ENCODE measurements at regions of chr19 and their contacts with region 1.

Region 1: DNA sequence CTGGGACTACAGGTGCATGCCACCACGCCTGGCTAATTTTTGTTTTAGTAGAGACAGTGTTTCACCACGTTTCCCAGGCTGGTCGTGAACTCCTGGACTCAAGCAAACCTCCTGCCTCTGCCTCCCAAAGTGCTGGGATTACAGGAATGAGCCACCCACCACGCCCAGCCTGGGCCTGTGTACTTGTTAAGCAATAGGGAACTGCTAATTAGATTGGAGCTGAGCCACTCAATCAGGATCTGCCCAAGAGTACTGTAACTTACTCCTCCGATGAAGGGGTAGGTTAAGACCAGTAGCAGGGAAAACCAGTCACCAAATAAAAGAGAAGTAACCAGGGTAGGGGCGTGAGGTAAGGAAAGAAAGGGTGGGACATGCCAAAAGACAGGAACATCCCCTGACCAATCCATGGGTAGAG is 2.3 kb downstream of the DDX39A start:
- DNase-seq: no peak
- H3K4me3 Mint-ChIP-seq: peak overlapping the region; percentile 93
- H3K27ac Mint-ChIP-seq: peak overlapping the region; percentile 97
- H3K4me1 Mint-ChIP-seq: peaks cover 55% of the 10 kb centered on the region
- H3K27me3 Mint-ChIP-seq: peaks cover 8% of the 10 kb centered on the region

Region 2: GRCh38 chr19:14405758-14406644 is 10.8 kb before region 1 on chr19:
- CTCF ChIA-PET with region 1: interaction called, 11 read pairs
- DNase-seq: peak; percentile 91
- H3K4me3 Mint-ChIP-seq: no peak overlapping the region
- H3K27ac Mint-ChIP-seq: peak overlapping the region; percentile 81
- H3K4me1 Mint-ChIP-seq: peaks cover 22% of the 10 kb centered on the region
- H3K27me3 Mint-ChIP-seq: no peaks in the 10 kb centered on the region